ENCODE measurements at regions of chr12 and their contacts with region 1.

Region 1: GRCh38 chr12:91355150-91356006 is 172.8 kb upstream of the DCN start:
- DNase-seq: peak; percentile 38 to 72 (median 46)
- ATAC-seq: peak; percentile 86 to 97 (median 96)
- H3K4me3 ChIP-seq: no peak overlapping the region
- H3K27ac ChIP-seq: no peak overlapping the region
- H3K4me1 ChIP-seq: peaks cover 0 to 8% (median 0%) of the 10 kb centered on the region in 3 donors
- H3K27me3 ChIP-seq: no peaks in the 10 kb centered on the region
- CTCF ChIP-seq: peak; percentile 49 to 78 (median 64)

Region 2: GRCh38 chr12:90978117-90978770 is 377.1 kb before region 1 on chr12:
- intact Hi-C with region 1: loop called in 1 of 3 experiments (anchors 10 kb)
- DNase-seq: no peak
- ATAC-seq: peak in 3 of 4 donors; percentile 79 to 83 (median 83)
- H3K4me3 ChIP-seq: no peak overlapping the region
- H3K27ac ChIP-seq: no peak overlapping the region
- H3K4me1 ChIP-seq: no peaks in the 10 kb centered on the region
- H3K27me3 ChIP-seq: no peaks in the 10 kb centered on the region
- CTCF ChIP-seq: peak; percentile 21 to 41 (median 26)

Measured in pancreas (tissue), 10 donors.